ENCODE measurements at regions of chr1 and their contacts with region 1.

Region 1: DNA sequence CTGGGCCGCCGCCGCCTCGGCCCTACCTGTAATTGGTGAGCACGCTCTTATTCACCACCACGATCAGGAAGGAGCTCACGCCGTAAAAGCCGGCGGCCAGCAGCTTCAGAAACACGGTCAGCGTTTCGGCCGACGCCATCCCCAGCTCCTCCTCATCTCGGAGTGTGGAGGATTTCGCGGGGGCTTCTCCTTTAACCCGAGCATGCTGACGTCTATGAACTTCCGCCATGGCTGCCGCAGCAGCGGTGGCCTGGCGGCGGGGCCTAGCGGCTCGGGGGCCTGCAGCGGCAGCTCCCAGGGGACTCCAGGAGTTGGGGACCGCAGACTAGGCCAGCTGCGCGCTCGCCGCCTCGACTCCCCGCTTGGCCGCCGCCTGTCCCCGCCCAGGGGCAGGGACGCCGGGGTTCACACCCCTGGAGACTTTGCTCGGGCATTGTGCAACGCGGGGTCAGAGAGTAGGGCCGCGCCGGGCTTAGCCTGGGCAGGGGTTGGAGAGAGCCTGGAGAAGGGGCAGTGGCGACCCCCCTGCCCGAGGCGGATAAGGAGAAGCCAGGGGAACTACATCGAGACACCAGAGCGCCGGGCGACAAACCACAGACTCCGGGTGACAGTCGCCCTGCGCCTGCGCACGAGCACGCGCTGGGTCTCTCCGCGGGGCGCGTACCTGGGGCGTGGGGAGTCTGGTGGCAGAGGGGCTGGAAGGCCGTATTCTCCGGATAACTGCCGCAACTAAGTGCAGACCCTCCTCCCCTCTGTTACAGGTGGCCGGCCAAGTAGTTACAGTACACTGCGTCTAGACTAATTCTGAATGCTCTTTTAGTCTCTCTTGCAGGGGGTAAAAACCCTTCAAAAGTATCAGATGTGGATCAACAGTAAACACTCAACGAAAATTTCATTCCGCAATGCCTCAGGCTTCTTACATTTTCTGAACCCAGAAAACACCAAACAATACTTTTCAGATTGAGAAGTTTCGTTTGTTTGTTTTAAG is at the start of gene SLC35D1:
- DNase-seq: peak; percentile 64 to 83 (median 71)
- H3K4me3 ChIP-seq: peak within 1 kb of the TSS; percentile 87
- H3K27ac ChIP-seq: peak within 1 kb of the TSS; percentile 78 to 97
- H3K4me1 ChIP-seq: no peaks in the 10 kb centered on the region
- H3K27me3 ChIP-seq: no peaks in the 10 kb centered on the region
- CTCF ChIP-seq: no peak
- EP300 ChIP-seq: no peak
- POLR2A ChIP-seq: no peak
- total RNA-seq, gene SLC35D1: 7.4 to 11.8 (median 10.3) TPM

Region 2: GRCh38 chr1:66924756-66925557 is 129.1 kb before region 1 on chr1 and contains the starts of genes DNAI4 and MIER1:
- intact Hi-C with region 1: loop called in 1 of 4 experiments (anchors 10 kb)
- DNase-seq: peak; percentile 97 to 98 (median 98)
- H3K4me3 ChIP-seq: peak within 1 kb of the TSS; percentile 79
- H3K27ac ChIP-seq: peak within 1 kb of the TSS; percentile 48 to 81
- H3K4me1 ChIP-seq: peaks cover 7% of the 10 kb centered on the region
- H3K27me3 ChIP-seq: no peaks in the 10 kb centered on the region
- CTCF ChIP-seq: peak in 2 of 3 donors; percentile 25 to 45
- EP300 ChIP-seq: peak; percentile 25
- POLR2A ChIP-seq: peak; percentile 57
- total RNA-seq, gene DNAI4: 21.7 to 52.6 (median 31.0) TPM
- total RNA-seq, gene MIER1: 33.2 to 51.2 (median 46.8) TPM

Region 3: DNA sequence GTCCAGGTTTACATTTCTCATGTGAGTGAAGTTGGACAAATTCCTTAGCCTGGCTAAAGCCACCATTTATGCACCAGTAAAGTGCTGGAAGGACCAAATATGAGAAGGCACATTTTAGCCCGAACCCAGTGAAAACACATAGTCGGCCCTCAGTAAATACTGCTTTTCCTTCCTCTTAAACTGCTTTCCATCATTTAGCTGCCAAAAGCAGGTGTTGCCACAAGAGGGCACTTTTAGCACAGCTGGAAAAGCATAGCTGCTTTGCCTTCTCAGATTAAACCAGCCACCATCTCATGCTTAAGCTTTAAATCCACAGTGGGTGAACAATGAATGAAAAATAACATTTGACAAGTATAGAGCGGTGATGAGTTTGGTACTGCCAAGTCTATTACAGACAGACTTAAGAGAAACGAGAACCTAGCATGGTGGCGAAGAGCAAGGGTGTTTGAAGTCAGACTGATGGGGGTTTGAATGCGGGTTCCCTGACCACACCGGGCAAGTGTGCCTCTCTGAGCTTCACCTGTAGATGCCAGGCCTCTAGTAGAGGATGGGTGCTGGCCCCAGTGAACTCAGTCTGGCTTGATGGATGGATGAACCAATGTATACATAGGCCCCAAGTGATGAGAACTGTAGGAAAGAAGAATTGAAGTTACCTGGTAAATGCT is 57.9 kb before region 1 on chr1:
- intact Hi-C with region 1: loop called in 1 of 4 experiments (anchors 10 kb)
- DNase-seq: peak in 4 of 5 donors; percentile 21 to 66 (median 42)
- H3K4me3 ChIP-seq: no peak overlapping the region
- H3K27ac ChIP-seq: no peak overlapping the region
- H3K4me1 ChIP-seq: no peaks in the 10 kb centered on the region
- H3K27me3 ChIP-seq: no peaks in the 10 kb centered on the region
- CTCF ChIP-seq: peak in 2 of 3 donors; percentile 34 to 36
- EP300 ChIP-seq: no peak
- POLR2A ChIP-seq: no peak

Measured in ovary (tissue), 10 donors.